ENCODE measurements at regions of chr3 and their contacts with region 1.

Region 1: GRCh38 chr3:13091898-13092611 is 18.8 kb upstream of the IQSEC1 start:
- DNase-seq: peak; percentile 84
- H3K4me3 ChIP-seq: no peak overlapping the region
- H3K27ac ChIP-seq: no peak overlapping the region
- H3K4me1 ChIP-seq: no peaks in the 10 kb centered on the region
- H3K27me3 ChIP-seq: no peaks in the 10 kb centered on the region
- CTCF ChIP-seq: peak; percentile 95

Region 2: GRCh38 chr3:12875857-12876836 is 215.9 kb before region 1 on chr3:
- intact Hi-C with region 1: no loop called
- DNase-seq: peak; percentile 43
- H3K4me3 ChIP-seq: peak overlapping the region; percentile 28
- H3K27ac ChIP-seq: no peak overlapping the region
- H3K4me1 ChIP-seq: no peaks in the 10 kb centered on the region
- H3K27me3 ChIP-seq: no peaks in the 10 kb centered on the region
- CTCF ChIP-seq: no peak

Region 3: DNA sequence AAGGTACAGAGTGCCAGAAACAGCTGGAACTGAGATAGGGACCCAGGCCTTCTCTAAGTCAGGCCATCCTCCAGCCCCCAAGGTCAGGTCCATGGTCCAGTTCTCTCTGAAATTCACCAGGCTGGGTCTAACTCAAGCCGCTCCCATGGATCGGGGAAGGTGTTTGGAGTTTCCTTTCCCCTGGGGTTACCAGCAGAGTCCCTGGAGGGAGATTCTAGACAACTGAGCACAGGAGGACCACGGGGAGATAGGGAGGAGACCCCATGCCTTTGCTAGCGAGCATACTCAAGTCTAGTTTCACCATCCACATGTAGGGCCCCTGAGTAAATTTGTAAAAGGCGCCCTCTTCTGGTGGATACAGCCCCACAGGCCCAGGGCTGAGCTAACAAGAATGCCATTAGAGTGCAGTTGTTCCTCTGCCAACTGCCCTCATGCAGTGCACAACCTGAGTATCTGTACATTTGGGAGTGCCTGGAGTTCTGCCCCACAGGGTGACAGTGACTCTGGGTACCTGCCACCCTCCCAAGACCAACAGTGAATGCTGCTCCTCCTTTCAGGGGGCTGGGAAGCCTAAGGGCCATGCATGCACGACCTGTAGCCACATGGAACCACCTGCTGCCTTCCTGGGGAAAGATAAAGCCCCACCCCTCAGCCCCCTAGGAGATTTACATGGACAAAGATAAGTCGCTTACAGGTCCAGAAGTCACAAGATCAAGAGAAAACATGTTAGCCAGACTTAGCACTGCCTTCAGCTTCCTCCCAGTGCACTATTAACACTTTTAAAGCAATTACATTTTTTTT is 107.8 kb before region 1 on chr3:
- intact Hi-C with region 1: no loop called
- DNase-seq: peak; percentile 78
- H3K4me3 ChIP-seq: no peak overlapping the region
- H3K27ac ChIP-seq: no peak overlapping the region
- H3K4me1 ChIP-seq: no peaks in the 10 kb centered on the region
- H3K27me3 ChIP-seq: no peaks in the 10 kb centered on the region
- CTCF ChIP-seq: peak; percentile 77

Region 4: DNA sequence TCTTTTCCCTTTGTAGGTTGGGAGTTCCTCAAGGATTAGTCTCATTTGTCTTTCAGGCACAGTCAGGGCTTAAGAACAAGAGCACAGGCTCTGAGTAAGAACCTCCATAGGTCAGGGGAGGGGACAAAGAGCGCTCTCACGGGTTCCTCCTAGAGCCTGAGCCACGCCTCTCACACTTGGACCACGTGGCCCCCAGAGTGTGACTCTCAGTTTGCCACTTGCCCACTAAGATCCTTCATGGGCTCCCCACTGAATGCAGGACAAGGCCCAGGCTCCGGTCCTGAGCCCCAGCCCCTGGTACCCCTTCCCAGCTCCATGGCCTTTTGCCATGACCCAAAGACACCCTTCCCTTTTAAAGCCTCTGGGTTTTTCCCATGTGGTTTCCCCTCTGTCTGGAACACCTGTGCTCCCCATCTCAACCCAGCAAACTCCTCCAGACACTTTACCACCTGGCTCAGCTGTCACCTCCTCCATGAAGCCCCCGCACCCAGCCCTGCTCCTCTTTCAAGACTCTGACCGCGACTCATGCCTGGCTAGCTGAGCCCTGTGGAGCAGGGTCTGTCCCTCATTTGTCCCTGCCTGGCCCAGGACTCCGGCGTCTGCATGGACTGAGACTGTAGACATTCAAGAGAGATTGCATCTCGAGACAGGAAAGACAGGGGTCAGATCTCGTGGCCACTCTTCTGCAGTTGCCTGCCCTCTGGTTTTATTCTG is 51.5 kb before region 1 on chr3:
- intact Hi-C with region 1: no loop called
- DNase-seq: no peak
- H3K4me3 ChIP-seq: no peak overlapping the region
- H3K27ac ChIP-seq: no peak overlapping the region
- H3K4me1 ChIP-seq: no peaks in the 10 kb centered on the region
- H3K27me3 ChIP-seq: no peaks in the 10 kb centered on the region
- CTCF ChIP-seq: no peak

Region 5: GRCh38 chr3:13452490-13453335 is 360.7 kb after region 1 on chr3:
- intact Hi-C with region 1: loop called (anchors 2 kb)
- DNase-seq: peak; percentile 62
- H3K4me3 ChIP-seq: peak overlapping the region; percentile 57
- H3K27ac ChIP-seq: peak overlapping the region; percentile 88
- H3K4me1 ChIP-seq: peaks cover 4% of the 10 kb centered on the region
- H3K27me3 ChIP-seq: no peaks in the 10 kb centered on the region
- CTCF ChIP-seq: peak; percentile 57

Region 6: DNA sequence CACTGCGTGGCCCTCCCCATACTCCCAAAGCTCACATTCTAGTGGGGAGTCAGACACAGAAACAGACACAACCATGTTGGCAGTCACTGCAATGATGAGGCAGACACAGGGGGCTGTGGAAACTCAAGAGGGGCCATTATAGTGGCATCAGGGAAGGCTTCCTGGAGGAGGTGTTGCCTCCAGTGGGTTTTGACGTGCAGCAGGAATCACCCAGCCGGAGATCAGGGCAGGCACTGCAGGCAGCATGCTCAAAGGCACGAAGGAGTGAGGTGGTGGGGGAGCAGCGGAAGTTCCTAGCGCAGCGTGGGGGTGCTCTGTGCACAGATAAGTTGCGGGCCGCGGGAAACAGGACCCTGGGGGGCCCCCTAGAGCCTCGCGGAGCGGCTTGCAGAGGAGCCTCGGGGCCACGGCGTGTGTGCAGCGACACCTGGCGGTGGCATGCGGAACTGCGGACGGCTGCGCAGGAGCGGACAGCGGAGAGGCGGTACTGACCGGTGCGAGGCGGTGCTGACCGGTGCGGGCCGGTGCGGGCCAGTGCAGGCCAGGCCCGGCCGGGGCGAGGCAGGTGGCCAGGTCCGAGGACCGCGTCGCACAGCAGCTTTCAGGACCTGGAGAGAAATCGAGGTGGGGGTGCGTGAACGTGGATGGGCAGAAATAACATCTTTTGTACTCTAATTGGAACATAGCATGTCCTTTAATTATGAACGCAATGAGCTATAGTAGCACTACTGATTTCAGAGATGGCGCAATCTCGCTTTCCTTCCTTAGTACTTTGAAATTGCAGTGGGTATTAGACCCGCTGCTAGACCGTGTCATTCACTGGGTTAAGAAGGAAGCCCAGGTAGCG is 558.4 kb after region 1 on chr3:
- intact Hi-C with region 1: loop called (anchors 5 kb)
- DNase-seq: peak; percentile 76
- H3K4me3 ChIP-seq: no peak overlapping the region
- H3K27ac ChIP-seq: no peak overlapping the region
- H3K4me1 ChIP-seq: peaks cover 9% of the 10 kb centered on the region
- H3K27me3 ChIP-seq: peaks cover 6% of the 10 kb centered on the region
- CTCF ChIP-seq: peak; percentile 100